Activated naive CD4-positive, alpha-beta T cell treated with anti-CD3 and anti-CD28 coated beads, Interleukin-2, amount 10 ng/mL, durations not matched to agents 7 days and 5 days (primary cell): ENCODE measurements at regions of chr20 and their contacts with region 1.

Region 1: DNA sequence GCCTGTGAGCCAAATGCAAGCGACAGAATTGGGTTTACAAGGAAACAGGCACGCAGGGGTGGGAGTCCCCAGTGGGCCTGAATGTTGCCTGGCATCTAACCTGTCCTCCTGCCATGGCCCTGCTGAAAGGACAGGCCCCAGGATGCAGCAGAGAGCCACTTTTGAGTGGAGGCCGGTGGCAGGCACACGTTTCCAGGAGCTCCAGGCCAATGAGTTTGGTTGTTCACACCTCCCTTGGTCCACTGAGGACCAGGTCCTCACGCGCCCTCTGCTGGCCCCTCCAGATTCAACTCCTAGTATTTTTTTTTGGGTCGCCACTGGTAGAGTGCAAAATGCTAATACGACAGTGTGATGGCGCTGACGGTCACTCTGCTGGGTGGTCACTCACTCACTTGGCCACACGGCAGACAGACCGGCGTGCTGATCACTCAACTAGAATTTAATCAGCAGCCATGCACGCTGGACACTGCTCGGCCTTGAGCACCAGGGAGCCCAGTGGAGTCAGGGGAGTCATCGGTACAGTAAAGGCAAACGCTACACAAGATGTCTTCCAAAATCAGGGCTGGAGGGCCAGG is 81.7 kb upstream of the NFATC2 start:
- DNase-seq: peak; percentile 70
- H3K4me3 Mint-ChIP-seq: no peak overlapping the region
- H3K27ac Mint-ChIP-seq: no peak overlapping the region
- H3K4me1 Mint-ChIP-seq: peaks cover 4% of the 10 kb centered on the region
- H3K27me3 Mint-ChIP-seq: peaks cover 10% of the 10 kb centered on the region

Region 2: DNA sequence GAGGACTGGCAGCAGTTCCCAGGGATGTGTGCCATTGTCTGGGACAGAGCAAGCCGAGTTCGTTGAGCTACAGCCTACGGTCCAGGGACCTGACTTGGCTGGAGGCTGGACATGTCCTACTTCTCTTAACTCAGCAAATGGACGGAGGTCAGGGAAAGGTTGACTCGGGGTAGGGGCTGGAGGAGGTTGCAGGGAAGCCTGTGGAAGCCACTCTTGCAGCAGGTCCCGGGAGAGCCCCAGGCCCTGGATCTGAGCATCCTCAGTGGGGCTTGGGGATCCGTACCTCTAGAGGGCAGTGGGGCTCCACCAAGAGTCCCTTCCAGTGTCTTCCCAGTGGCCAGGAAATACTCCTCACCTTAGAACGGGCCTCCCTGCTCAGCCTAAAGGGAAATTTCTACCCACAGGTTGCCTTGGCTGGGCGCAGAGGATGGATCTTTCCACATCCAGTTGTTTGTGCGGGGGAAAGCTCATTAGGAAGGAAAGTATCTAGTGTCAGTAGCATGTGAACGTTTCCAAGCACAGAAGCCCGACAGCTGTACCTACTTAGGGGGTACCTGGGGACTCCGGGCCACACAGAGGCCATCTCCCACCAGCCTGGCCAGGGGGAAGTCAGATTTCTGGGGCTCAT is 252.0 kb before region 1 on chr20:
- CTCF ChIA-PET with region 1: interaction called, 21 read pairs
- DNase-seq: peak; percentile 70
- H3K4me3 Mint-ChIP-seq: no peak overlapping the region
- H3K27ac Mint-ChIP-seq: no peak overlapping the region
- H3K4me1 Mint-ChIP-seq: peaks cover 8% of the 10 kb centered on the region
- H3K27me3 Mint-ChIP-seq: peaks cover 9% of the 10 kb centered on the region